ENCODE measurements at regions of chr2 and their contacts with region 1.

Region 1: DNA sequence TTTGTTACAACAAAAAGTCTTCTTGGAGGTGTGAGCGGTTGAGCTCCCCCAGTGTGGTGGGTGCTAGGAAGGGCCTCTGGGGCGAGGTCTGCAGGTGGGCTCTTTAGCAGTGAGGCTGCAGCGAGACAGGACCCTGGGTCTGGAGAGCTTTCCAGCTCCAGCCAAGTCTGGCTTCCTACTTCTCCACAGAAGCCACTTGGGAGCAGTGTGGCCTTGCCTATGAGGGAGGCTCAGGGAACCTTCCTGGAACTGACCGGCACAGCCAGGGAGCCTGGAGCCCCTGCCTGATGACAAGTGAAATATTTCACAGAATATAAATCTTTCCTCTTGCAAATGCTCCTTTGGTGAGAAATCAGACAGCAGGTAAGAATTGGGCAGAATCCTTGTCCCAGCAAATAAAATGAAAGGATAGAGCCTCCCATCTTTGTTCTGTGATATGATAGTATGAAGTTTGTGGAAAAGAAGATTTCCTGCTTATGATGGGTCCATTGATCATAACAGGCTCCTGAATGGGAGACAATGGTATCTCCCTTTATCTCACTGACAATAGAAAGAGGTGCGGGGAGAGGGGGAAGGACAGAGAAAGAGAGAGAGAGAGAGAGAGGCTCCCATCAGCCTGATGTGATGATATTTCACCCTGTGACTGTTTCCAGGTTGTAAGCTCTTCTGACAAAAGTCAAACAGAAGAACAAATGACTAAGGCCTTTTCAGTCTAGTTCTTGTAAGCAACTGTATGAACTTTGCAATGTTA is 289.8 kb upstream of the SPRED2 start:
- DNase-seq: peak; percentile 61
- H3K4me3 ChIP-seq: no peak overlapping the region
- H3K27ac ChIP-seq: no peak overlapping the region
- H3K4me1 ChIP-seq: no peaks in the 10 kb centered on the region; a peak in 1 of 4 replicates
- H3K27me3 ChIP-seq: no peaks in the 10 kb centered on the region
- CTCF ChIP-seq: no peak
- EP300 ChIP-seq: no peak
- RAD21 ChIP-seq: peak; percentile 95

Region 2: GRCh38 chr2:65710779-65711295 is 11.4 kb before region 1 on chr2:
- CTCF ChIA-PET with region 1: interaction called, 15 read pairs
- POLR2A ChIA-PET with region 1: no interaction called
- DNase-seq: no peak
- H3K4me3 ChIP-seq: no peak overlapping the region
- H3K27ac ChIP-seq: no peak overlapping the region
- H3K4me1 ChIP-seq: no peaks in the 10 kb centered on the region
- H3K27me3 ChIP-seq: no peaks in the 10 kb centered on the region
- CTCF ChIP-seq: peak; percentile 40
- EP300 ChIP-seq: no peak
- RAD21 ChIP-seq: no peak

Region 3: DNA sequence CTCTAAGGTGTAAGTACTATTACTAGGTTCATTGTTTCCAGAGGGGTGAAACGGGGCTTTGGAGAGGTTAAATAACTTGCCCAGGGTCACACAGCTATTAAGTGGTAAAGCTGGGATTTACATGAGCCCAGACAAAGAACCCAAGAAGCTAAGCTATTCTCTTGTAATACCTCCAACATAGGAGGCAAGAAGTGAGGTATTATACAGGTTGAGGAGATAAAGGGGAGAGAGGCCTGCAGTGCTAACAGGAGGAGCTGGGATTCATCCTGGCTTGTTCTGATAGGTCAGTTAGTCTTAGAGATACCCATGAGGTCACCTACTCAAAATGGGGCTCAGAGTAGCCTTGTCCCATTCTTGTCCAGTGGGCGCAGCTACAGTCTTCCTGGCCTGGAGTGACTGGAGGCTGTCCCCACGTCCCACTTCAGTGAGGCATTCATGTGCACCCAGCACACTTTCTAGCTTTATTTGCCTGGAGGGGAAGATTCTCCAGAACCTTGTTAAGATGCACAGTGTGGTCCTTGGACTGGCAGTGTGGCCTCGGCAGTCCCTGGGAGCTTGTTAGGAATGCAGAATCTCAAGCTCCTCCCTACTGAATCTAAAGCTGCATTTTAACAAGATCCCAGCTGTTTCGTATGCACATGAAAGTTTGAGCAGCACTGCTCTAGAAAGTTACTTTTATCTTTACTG is 776.2 kb after region 1 on chr2:
- CTCF ChIA-PET with region 1: no interaction called
- POLR2A ChIA-PET with region 1: no interaction called
- DNase-seq: no peak
- H3K4me3 ChIP-seq: no peak overlapping the region
- H3K27ac ChIP-seq: no peak overlapping the region
- H3K4me1 ChIP-seq: peaks cover 3 to 19% of the 10 kb centered on the region in 2 experiments; a peak in 3 of 4 replicates
- H3K27me3 ChIP-seq: no peaks in the 10 kb centered on the region
- CTCF ChIP-seq: no peak
- EP300 ChIP-seq: no peak
- RAD21 ChIP-seq: no peak

Region 4: DNA sequence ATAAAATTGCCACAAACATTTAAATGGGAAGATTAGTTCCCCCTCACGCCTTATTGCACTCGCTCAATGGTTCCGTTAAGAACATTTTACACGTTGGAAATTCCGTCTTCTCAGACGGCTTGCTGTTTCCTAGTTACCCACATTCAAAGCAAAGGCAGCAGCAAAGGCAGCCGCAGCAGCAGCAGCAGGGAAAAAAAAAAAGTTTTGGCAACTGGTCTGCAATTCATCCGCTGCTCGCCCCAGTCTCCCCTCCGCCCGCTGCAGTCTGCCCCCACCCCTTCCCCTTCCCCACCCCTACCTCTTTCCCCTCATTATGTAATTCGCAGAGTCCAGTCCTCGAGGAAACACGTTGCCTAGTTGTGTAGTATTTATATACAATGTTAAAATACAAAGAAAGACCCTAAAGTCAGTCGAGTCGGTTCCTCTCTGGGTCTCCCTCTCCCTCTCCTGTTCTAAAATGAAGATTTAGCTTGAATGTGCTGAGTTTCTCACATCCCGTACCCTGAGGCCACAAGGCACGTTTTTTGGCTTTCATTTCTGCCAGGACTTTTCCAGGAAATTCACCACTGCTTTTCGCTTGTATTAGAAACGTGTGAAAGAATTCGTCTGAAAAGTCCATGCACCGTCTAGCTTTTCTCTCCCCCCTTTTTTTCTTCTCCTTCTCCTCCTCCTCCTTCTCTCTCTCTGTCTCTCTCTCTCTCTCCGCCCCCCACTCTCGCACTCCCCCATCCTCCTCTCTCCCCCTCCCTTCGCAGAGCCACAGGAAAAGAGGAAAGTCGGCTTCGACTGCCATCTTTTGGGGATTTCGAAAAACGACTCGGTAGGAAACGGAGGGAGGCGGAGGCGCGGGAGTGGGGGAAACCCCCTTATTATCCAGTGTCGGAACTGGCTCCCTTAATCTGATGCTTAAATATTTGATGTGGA is 852.8 kb after region 1 on chr2:
- CTCF ChIA-PET with region 1: interaction called, 11 read pairs
- POLR2A ChIA-PET with region 1: no interaction called
- DNase-seq: peak; percentile 91
- H3K4me3 ChIP-seq: peak overlapping the region; percentile 53 to 73
- H3K27ac ChIP-seq: peak overlapping the region; percentile 93 to 98
- H3K4me1 ChIP-seq: peaks cover 5 to 18% of the 10 kb centered on the region in 2 experiments; a peak in 3 of 4 replicates
- H3K27me3 ChIP-seq: no peaks in the 10 kb centered on the region
- CTCF ChIP-seq: peak; percentile 68
- EP300 ChIP-seq: peak in 1 of 2 experiments; percentile 32; a peak in 2 of 4 replicates
- RAD21 ChIP-seq: peak; percentile 82